ENCODE measurements at regions of chr12 and their contacts with region 1.

Region 1: DNA sequence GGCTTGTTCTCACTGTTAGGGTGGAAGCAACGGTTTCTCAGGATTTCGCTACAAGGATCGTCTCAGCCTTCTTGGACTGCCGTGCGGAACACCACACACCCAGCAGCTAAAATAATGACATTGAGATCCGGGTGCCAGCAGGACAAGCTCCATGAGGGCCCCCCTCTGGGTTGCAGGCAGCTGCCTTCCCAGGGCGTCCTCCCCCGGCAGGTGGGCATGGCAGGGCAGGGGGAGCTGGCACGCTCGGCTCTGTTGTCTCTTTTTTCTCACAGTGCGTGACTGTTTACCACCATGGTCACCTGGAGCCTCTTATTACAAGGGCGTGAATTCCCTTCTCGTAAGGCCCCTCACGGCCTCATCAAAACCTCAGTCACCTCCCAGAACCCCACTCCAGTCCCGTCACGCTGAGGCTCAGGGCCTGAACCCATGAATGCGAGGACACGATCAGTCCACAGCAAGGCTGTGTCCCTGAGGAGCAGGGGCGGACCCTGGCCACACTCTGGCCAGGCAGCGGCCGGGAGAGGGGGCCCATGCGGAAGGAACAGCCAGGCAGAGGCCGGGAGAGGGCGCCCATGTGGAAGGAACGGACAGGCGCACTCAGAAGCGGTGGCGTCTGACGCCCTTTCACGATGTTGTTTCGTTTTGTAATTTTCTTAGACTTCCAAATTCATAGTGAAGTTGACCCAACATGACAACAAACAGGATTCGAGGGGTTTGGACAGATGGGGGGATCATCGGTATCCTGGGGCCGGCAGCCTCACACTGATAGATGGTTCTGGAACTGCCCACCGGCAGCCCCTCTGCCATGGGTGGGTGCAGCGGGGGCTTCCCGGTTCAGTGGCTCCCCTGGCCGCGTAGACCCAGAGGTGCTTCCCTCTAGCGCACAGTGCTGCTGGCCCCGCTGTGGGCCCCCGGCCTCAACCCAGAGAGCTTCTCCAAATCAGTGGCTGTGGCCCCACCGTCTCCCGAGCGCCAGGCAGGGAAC is 10.0 kb downstream of the LRCOL1 start:
- DNase-seq: peak; percentile 57
- ATAC-seq: peak; percentile 74
- H3K4me3 Mint-ChIP-seq: peak overlapping the region; percentile 64
- H3K27ac Mint-ChIP-seq: no peak overlapping the region
- H3K4me1 Mint-ChIP-seq: peaks cover 16% of the 10 kb centered on the region
- H3K27me3 Mint-ChIP-seq: peaks cover 68% of the 10 kb centered on the region

Region 2: DNA sequence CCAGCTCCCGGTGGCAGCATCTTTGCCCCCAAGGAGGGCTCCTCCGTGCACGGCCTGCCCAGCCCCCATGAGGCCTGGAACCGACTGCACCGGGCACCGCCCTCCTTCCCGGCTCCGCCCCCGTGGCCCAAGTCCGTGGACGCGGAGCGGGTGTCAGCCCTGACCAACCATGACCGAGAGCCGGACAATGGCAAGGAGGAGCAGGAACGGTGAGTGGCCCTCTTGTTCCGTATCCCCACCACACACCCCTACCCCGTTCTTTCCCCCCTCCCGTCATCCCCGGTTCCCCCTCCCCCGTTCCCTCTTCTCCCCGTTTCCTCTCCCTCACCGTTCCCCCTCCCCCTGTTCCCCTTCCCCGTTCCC is 18.3 kb before region 1 on chr12:
- CTCF ChIA-PET with region 1: no interaction called
- DNase-seq: no peak
- ATAC-seq: no peak
- H3K4me3 Mint-ChIP-seq: no peak overlapping the region
- H3K27ac Mint-ChIP-seq: no peak overlapping the region
- H3K4me1 Mint-ChIP-seq: no peaks in the 10 kb centered on the region
- H3K27me3 Mint-ChIP-seq: no peaks in the 10 kb centered on the region

Region 3: DNA sequence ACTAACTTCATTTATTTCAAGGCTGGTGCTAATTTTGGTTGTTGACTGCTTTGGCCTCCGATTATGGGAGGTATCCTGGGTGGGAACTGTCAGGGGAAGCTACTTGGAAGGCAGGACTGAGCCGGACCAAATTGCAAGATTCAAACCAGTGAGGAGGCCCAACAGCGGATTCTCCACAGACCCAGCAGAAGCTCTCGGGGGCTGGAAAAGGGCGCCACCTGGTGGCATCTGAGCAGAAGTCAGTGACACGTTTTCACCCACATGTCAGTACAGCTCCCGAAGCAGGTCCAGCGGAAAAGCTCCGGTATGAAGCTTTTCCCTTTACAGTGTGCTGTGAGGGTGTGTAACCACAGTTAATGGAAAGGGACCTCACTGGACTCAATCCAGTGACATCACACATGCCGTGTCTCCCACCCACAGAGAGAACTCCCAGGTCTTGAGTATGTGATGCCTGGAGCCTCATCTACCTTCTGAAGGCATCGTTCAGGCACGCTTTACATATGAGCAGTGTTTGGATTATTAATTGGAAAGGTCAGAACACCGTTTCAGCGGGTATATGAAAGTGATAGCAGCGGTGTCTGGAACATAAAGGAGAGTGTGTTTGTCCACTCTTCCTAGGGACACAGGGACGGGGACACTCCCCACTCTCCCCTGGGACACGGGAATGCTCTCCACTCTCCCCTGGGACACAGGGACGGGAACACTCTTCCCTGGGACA is 14.7 kb after region 1 on chr12:
- CTCF ChIA-PET with region 1: interaction called, 10 read pairs
- DNase-seq: peak; percentile 85
- ATAC-seq: peak; percentile 91
- H3K4me3 Mint-ChIP-seq: no peak overlapping the region
- H3K27ac Mint-ChIP-seq: no peak overlapping the region
- H3K4me1 Mint-ChIP-seq: peaks cover 1% of the 10 kb centered on the region
- H3K27me3 Mint-ChIP-seq: peaks cover 42% of the 10 kb centered on the region